Activated B cell treated with CpG ODN at 0.5 μM for 24 hours (primary cell): ENCODE measurements at regions of chr3 and their contacts with region 1.

Region 1: GRCh38 chr3:128051837-128052594 is at the start of gene SEC61A1:
- DNase-seq: peak; percentile 97
- ATAC-seq: peak; percentile 95
- H3K4me3 Mint-ChIP-seq: peak within 1 kb of the TSS; percentile 96
- H3K27ac Mint-ChIP-seq: peak within 1 kb of the TSS; percentile 95
- H3K4me1 Mint-ChIP-seq: peaks cover 41% of the 10 kb centered on the region
- H3K27me3 Mint-ChIP-seq: no peaks in the 10 kb centered on the region
- CTCF ChIP-seq: no peak
- total RNA-seq, gene SEC61A1: 83.2 and 84.0 TPM in 2 replicates

Region 2: GRCh38 chr3:127574880-127575878 is 476.8 kb before region 1 on chr3:
- CTCF ChIA-PET with region 1: no interaction called
- POLR2A ChIA-PET with region 1: no interaction called
- intact Hi-C with region 1: loop called (anchors 5 kb)
- DNase-seq: peak; percentile 83
- ATAC-seq: peak; percentile 99
- H3K4me3 Mint-ChIP-seq: no peak overlapping the region
- H3K27ac Mint-ChIP-seq: peak overlapping the region; percentile 36
- H3K4me1 Mint-ChIP-seq: peaks cover 9% of the 10 kb centered on the region
- H3K27me3 Mint-ChIP-seq: no peaks in the 10 kb centered on the region
- CTCF ChIP-seq: no peak

Region 3: DNA sequence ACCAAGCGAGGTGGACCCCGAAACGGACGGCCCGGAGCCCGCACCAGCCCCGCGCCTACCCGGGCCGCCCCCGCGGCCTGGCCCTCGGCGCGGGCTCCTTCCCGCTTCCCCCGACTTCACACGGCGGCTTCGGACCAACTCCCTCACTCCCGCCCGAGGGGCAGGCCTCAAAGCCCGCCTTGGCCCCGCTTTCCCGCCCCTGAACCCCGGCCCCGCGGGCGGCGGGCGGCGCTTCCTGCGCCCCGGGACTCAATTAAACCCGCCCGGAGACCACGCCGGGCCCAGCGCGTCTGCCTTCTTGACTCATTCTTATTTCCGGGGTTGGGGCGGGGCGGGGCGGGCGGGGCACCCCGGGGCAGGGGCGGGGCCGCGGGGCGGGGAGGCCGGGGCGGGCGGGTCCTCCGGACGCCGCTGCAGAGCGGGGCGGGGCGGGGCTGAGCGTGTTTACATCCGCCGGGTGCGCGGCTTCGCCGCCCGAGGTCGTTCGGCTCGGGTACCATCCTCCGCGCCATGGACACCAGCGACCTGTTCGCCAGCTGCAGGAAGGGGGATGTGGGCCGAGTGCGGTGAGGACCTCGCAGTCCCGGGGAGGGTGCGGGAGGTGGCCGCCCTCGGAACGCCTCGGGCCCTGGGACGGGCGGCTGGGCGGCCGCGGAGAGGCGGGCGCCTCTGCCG is 379.4 kb before region 1 on chr3 and contains the start of gene ABTB1:
- CTCF ChIA-PET with region 1: no interaction called
- POLR2A ChIA-PET with region 1: no interaction called
- intact Hi-C with region 1: loop called (anchors 1 kb)
- DNase-seq: peak; percentile 79
- ATAC-seq: peak; percentile 85
- H3K4me3 Mint-ChIP-seq: peak within 1 kb of the TSS; percentile 91
- H3K27ac Mint-ChIP-seq: peak within 1 kb of the TSS; percentile 93
- H3K4me1 Mint-ChIP-seq: peaks cover 20% of the 10 kb centered on the region
- H3K27me3 Mint-ChIP-seq: no peaks in the 10 kb centered on the region
- CTCF ChIP-seq: no peak
- total RNA-seq, gene ABTB1: 36.1 and 42.0 TPM in 2 replicates

Region 4: DNA sequence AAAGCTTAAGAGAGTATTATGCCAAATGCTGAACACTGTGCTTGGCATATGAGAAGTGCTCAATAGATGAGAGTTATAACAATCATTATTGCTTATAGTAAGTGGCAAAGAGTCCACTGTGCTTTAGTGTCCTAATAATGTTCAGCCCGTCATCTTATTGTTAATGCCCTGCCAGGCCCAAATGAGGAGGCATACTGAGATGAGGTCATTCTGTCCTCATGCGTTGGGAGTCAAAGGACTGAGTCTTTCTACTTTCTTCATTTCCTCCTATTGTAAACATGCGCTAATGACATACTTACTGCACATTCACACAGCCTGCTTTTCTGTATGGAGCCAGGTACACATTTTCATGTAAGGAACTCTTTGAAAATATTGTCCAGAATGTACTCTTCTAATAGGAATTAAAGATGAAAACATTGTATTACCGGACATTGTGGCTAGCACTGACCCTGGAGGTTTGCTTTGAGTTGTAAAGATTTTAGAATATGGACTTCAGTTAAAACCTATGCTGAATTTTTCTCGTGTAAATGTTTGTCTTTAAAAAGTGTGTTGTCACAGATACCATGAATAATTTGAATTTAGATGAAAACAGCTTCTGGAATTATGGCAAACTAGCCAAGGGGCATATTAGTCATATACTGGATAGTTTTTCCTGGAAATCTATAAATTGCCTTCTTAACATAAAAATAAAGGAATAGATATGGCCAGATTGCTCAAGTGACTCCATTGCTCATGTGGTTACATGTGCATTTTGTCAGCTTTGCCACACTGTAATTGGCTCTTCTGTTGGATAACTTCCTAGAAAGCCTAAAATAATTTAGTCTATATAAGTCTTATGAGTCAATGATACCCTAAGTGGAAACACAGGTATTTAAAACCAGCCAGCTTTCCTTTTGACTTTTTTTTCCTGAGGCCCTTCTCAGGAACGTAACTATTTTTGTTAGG is 98.7 kb before region 1 on chr3:
- CTCF ChIA-PET with region 1: no interaction called
- POLR2A ChIA-PET with region 1: no interaction called
- intact Hi-C with region 1: no loop called
- DNase-seq: no peak
- ATAC-seq: no peak
- H3K4me3 Mint-ChIP-seq: no peak overlapping the region
- H3K27ac Mint-ChIP-seq: no peak overlapping the region
- H3K4me1 Mint-ChIP-seq: no peaks in the 10 kb centered on the region
- H3K27me3 Mint-ChIP-seq: no peaks in the 10 kb centered on the region
- CTCF ChIP-seq: no peak

Region 5: DNA sequence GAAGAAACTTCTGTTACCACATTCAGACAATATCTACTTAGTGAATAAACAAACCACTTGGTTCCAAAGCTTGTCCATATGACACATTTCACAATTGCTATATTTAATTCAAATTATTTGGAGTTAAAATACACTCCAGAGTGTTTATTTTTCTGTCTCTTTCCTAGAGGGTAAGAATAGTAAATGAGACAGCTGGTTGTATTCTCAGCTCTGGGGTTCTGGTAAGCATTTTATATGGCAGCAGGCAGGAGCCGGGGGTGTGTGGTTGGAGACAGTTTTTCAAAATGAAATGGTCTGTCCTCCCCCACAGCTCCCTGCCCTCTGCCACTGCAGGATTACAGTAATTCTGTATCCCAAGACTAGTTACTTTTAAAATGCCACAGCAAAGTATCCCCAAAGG is 10.7 kb before region 1 on chr3:
- CTCF ChIA-PET with region 1: no interaction called
- POLR2A ChIA-PET with region 1: no interaction called
- intact Hi-C with region 1: no loop called
- DNase-seq: no peak
- ATAC-seq: no peak
- H3K4me3 Mint-ChIP-seq: no peak overlapping the region
- H3K27ac Mint-ChIP-seq: no peak overlapping the region
- H3K4me1 Mint-ChIP-seq: no peaks in the 10 kb centered on the region
- H3K27me3 Mint-ChIP-seq: peaks cover 9% of the 10 kb centered on the region
- CTCF ChIP-seq: no peak

Region 6: GRCh38 chr3:128068211-128068620 is 16.2 kb after region 1 on chr3:
- CTCF ChIA-PET with region 1: interaction called, 4 read pairs
- POLR2A ChIA-PET with region 1: no interaction called
- intact Hi-C with region 1: loop called (anchors 2 kb)
- DNase-seq: no peak
- ATAC-seq: peak; percentile 68
- H3K4me3 Mint-ChIP-seq: no peak overlapping the region
- H3K27ac Mint-ChIP-seq: no peak overlapping the region
- H3K4me1 Mint-ChIP-seq: no peaks in the 10 kb centered on the region
- H3K27me3 Mint-ChIP-seq: no peaks in the 10 kb centered on the region
- CTCF ChIP-seq: peak; percentile 30

Region 7: GRCh38 chr3:128482666-128483656 is 430.9 kb after region 1 on chr3:
- CTCF ChIA-PET with region 1: no interaction called
- POLR2A ChIA-PET with region 1: no interaction called
- intact Hi-C with region 1: no loop called
- DNase-seq: no peak
- ATAC-seq: no peak
- H3K4me3 Mint-ChIP-seq: peak overlapping the region; percentile 68
- H3K27ac Mint-ChIP-seq: no peak overlapping the region
- H3K4me1 Mint-ChIP-seq: peaks cover 29% of the 10 kb centered on the region
- H3K27me3 Mint-ChIP-seq: peaks cover 75% of the 10 kb centered on the region
- CTCF ChIP-seq: no peak

Region 8: GRCh38 chr3:128650096-128651050 is 598.4 kb after region 1 on chr3 and contains the start of gene RPN1:
- CTCF ChIA-PET with region 1: no interaction called
- POLR2A ChIA-PET with region 1: no interaction called
- intact Hi-C with region 1: loop called (anchors 1 kb)
- DNase-seq: peak; percentile 90
- ATAC-seq: peak; percentile 97
- H3K4me3 Mint-ChIP-seq: peak within 1 kb of the TSS; percentile 89
- H3K27ac Mint-ChIP-seq: peak within 1 kb of the TSS; percentile 86
- H3K4me1 Mint-ChIP-seq: peaks cover 41% of the 10 kb centered on the region
- H3K27me3 Mint-ChIP-seq: no peaks in the 10 kb centered on the region
- CTCF ChIP-seq: no peak
- total RNA-seq, gene RPN1: 93.4 and 95.2 TPM in 2 replicates